ENCODE measurements at regions of chr14 and their contacts with region 1.

Region 1: GRCh38 chr14:106821119-106821518 is 1294.7 kb downstream of the TMEM121 start:
- DNase-seq: no peak
- ATAC-seq: no peak
- H3K4me3 ChIP-seq: no peak overlapping the region
- H3K4me3 Mint-ChIP-seq: no peak overlapping the region
- H3K27ac ChIP-seq: no peak overlapping the region
- H3K27ac Mint-ChIP-seq: no peak overlapping the region
- H3K4me1 ChIP-seq: no peaks in the 10 kb centered on the region
- H3K4me1 Mint-ChIP-seq: no peaks in the 10 kb centered on the region
- H3K27me3 ChIP-seq: peaks cover 0 to 3% of the 10 kb centered on the region in 2 experiments
- H3K27me3 Mint-ChIP-seq: peaks cover 12% of the 10 kb centered on the region
- CTCF ChIP-seq: no peak

Region 2: GRCh38 chr14:106738075-106738474 is 83.0 kb before region 1 on chr14:
- CTCF ChIA-PET with region 1: no interaction called
- POLR2A ChIA-PET with region 1: no interaction called
- intact Hi-C with region 1: no loop called
- DNase-seq: peak in 4 of 9 experiments; percentile 44 to 63 (median 56)
- ATAC-seq: no peak
- H3K4me3 ChIP-seq: no peak overlapping the region
- H3K4me3 Mint-ChIP-seq: no peak overlapping the region
- H3K27ac ChIP-seq: no peak overlapping the region
- H3K27ac Mint-ChIP-seq: no peak overlapping the region
- H3K4me1 ChIP-seq: no peaks in the 10 kb centered on the region
- H3K4me1 Mint-ChIP-seq: peaks cover 21% of the 10 kb centered on the region
- H3K27me3 ChIP-seq: no peaks in the 10 kb centered on the region
- H3K27me3 Mint-ChIP-seq: no peaks in the 10 kb centered on the region
- CTCF ChIP-seq: peak; percentile 54

Region 3: GRCh38 chr14:106831322-106831720 is 10.2 kb after region 1 on chr14:
- CTCF ChIA-PET with region 1: interaction called, 15 read pairs
- POLR2A ChIA-PET with region 1: no interaction called
- intact Hi-C with region 1: no loop called
- DNase-seq: peak in 7 of 9 experiments; percentile 20 to 72 (median 66)
- ATAC-seq: peak; percentile 67
- H3K4me3 ChIP-seq: no peak overlapping the region
- H3K4me3 Mint-ChIP-seq: no peak overlapping the region
- H3K27ac ChIP-seq: no peak overlapping the region
- H3K27ac Mint-ChIP-seq: no peak overlapping the region
- H3K4me1 ChIP-seq: no peaks in the 10 kb centered on the region
- H3K4me1 Mint-ChIP-seq: no peaks in the 10 kb centered on the region
- H3K27me3 ChIP-seq: no peaks in the 10 kb centered on the region
- H3K27me3 Mint-ChIP-seq: peaks cover 6% of the 10 kb centered on the region
- CTCF ChIP-seq: peak; percentile 58

Measured in CD8-positive, alpha-beta T cell (primary cell).